ENCODE measurements at regions of chr19 and their contacts with region 1.

Region 1: DNA sequence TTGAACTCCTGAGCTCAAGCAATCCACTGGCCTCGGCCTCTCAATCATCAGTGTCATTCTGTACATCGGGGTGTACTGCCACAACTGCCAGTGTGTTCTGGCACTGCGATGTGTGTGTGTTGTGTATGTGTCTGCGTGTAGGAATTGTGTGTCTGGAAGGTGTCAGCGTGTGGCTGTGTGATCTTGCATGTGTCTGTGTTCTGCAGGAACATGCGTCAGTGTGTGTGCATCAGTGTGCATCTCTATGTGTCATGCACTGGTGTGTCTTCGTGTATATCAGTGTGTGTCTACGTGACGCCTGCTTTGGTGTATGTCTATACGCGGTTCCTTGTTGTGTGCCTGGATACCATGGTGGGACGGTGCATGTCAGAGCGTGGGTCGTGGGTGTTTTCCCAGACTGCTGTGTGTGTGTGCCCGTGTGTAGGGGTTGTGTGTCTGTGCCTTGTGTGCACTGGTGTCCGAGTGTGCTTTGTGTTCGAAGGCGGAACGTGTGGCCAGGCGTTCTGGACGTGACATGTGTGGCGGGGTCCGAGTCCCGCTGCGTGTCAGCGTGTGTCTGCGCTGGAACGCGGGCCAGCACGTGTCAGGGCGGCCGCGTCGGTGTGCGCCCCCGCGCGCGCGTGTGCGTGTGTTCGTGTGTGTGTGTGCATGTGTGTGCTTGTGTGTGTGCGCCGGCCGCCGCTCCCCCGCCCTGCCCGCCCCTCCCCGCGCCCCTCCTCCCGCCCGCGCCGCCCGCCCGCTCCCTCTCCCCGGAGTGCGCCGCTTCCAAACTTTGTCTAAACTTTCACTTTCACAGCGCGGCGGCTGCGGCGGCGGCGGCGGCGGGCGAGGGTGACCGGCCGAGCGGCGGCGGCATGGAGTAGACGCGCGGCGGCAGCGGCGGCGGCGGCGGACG is at the start of gene NFIX:
- DNase-seq: peak in 1 of 2 experiments; percentile 65
- H3K4me3 ChIP-seq: peak within 1 kb of the TSS; percentile 46
- H3K4me3 Mint-ChIP-seq: peak within 1 kb of the TSS; percentile 90
- H3K27ac Mint-ChIP-seq: peak within 1 kb of the TSS; percentile 48
- H3K4me1 ChIP-seq: no peaks in the 10 kb centered on the region
- H3K4me1 Mint-ChIP-seq: no peaks in the 10 kb centered on the region
- H3K27me3 ChIP-seq: peaks cover 2% of the 10 kb centered on the region; the same call in 1 of the 2 replicates
- H3K27me3 Mint-ChIP-seq: peaks cover 17% of the 10 kb centered on the region
- CTCF ChIP-seq: no peak
- total RNA-seq, gene NFIX: 0.35 and 0.82 TPM in 2 replicates

Region 2: GRCh38 chr19:12945479-12946091 is 49.4 kb before region 1 on chr19 and contains the start of gene RAD23A:
- CTCF ChIA-PET with region 1: no interaction called
- POLR2A ChIA-PET with region 1: interaction called, 10 read pairs
- intact Hi-C with region 1: no loop called
- DNase-seq: peak; percentile 96 to 97
- H3K4me3 ChIP-seq: peak within 1 kb of the TSS; percentile 77
- H3K4me3 Mint-ChIP-seq: peak within 1 kb of the TSS; percentile 83
- H3K27ac Mint-ChIP-seq: peak within 1 kb of the TSS; percentile 96
- H3K4me1 ChIP-seq: peaks cover 12% of the 10 kb centered on the region
- H3K4me1 Mint-ChIP-seq: peaks cover 13% of the 10 kb centered on the region
- H3K27me3 ChIP-seq: no peaks in the 10 kb centered on the region
- H3K27me3 Mint-ChIP-seq: no peaks in the 10 kb centered on the region
- CTCF ChIP-seq: no peak
- total RNA-seq, gene RAD23A: 102 and 112 TPM in 2 replicates